GM10248 (cell line): ENCODE measurements at regions of chr3 and their contacts with region 1.

Region 1: GRCh38 chr3:193640165-193640715 is 47.2 kb downstream of the OPA1 start:
- DNase-seq: no peak
- CTCF ChIP-seq: no peak

Region 2: DNA sequence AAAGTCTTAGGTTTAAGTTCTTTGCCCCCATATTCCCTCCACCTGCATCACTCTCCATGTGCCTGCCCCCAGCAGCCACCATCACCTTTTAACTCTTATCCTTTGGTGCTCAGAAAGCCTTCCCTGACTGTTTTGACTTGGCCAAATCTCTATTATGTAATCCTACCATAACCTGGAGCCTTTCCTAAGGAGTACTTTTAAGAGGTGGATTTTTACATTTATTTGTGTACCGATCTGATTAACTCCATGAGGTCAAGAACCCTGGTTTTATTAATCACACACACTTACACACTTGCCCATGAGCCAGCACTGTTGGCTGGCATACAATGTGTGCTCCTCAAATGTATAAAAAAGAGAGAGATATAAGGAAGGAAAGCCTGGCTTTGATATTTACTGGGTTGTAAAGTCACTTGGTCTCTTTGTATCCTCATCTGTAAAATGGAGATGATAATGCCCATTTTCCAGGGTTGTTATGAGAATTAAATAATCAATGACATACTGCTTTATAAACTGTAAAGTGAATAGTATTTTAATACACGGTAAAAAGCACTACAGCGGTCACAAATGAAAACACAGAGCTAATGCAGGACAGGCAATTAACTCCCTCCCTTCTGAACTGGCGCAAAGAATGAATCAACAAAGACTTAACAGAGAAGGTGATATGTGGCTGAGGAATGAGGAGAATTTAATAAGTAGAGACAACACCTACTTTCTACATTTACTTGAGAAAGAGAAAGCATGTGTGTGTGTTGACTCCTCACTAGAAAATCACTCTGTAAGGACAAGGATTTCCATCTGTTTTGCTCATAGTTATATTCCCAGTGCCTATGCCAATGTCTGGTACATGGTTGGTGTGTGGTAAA is 130.9 kb before region 1 on chr3:
- CTCF ChIA-PET with region 1: no interaction called
- POLR2A ChIA-PET with region 1: no interaction called
- DNase-seq: no peak
- CTCF ChIP-seq: no peak

Region 3: DNA sequence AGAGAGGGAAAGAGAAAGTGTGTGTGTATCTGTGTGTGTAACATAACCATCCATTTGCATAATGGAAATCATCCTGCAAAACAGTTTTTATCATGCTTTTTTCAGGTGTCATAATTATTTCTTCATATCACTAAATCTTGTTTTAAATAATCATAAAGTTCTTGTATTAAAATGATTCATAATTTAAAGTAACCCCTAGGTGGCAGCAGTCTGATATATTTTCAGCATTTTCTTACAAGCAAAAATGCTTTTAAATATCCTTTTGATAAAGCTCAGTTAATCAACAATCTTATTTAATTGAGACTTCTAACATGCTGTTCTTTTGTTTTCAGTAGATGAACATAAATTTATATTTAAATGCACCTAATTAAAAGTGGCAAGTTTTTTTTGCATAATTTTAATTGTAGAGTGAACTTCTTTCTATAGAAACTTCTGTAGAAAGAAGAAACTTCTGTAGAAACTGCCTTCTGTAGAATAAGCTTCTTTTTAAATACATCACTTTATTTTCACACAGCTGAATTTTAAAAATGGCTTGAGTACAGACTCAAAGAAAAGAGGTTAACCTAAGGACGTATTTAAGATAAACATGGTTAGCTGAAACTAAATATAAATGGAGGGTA is 25.2 kb after region 1 on chr3:
- CTCF ChIA-PET with region 1: interaction called, 58 read pairs
- POLR2A ChIA-PET with region 1: no interaction called
- DNase-seq: no peak
- CTCF ChIP-seq: peak; percentile 32